GM13977 (cell line): ENCODE measurements at regions of chr12 and their contacts with region 1.

Region 1: DNA sequence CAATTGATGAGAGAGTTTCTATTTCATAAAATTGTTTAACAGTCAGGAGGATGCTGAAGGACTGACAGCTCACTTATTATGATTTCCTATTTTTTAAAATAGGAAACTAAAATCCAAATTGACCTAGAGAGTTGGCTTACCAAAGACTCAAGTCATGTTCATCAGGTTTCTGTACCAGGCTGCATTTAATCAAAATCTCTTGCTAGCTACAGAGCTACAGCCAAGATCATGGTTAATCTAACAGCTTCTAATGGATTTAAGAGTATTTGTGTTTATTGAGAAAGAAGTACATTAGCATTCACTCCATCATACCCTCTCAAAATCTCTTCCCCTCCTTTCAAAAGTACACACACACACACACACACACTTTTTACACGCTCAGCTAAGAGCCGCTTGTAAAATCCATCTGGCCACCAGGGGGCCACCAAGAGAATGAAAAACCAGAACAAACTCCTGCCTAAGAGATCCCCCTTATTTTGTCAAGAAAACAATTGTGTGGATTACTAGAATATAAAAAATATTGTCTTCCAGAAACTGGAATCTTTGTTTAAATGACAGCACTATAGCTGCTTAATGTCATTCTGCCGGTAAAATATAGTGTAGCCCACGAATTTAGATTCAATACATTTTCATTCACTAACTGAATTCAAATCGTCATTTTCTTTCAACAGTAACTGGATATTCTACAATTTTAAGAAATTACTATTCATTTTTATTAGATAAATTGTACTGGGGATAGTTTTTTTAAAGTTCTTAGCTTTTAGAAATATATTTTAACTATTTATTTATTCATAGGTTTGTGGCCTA is 334.0 kb downstream of the BTG1 start:
- DNase-seq: peak; percentile 26
- CTCF ChIP-seq: peak; percentile 78

Region 2: DNA sequence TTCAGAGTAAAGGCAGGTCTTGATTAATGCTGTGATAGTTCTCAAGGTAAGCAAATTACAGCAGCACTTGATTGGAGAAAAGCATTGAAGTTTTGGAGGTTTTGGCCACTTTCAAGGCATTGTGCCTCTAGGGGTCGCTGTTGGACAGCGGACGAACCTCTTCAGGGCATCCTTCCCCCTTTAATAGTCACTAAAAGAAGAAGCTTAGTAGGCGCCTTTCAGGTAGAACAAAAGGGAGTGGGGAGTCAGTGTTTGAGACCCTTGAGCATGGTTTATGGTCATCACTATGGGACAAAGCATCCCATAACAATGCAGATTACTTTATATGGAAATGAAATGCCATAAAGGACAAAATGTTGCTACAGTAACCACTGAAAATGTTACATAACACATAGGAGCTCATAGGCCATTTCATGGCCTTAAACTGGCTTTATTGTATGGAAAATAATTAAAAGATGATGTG is 429.6 kb before region 1 on chr12:
- in situ Hi-C with region 1: loop called (anchors 25 kb)
- DNase-seq: peak; percentile 21
- CTCF ChIP-seq: peak; percentile 84

Region 3: DNA sequence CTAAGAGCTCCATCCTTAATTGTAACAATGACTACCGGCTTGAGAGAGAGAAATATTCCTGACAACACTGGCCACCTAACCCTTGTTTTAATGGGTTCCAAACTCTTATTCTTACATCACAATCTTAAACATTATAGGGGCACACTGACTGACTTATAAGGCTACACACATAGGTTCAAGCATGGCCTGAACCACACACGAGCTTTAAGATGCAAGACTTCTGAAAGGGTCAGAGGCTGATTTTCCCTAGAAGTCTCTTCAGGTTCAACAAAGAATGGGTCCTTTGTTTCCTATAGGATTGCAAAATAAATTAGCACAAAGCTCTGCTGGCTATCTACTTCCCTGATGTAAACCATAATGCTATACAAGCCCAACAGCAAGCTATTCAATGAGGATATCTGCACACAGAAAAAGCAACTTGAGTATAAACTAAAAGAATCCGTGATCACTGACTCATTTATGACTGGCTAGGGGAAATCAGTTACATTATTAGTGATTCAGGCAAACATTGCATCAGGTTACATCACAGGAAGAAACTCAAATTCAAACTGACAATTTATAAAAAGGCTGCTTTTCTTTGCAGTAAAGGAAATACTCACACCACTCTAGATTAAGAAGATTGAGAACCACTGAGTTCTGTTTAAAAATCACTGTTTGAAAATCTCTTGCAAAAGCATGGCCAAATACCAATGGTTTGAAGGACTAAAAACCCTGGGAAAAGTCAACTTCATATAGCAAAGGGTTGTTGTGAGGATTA is 325.5 kb after region 1 on chr12:
- in situ Hi-C with region 1: loop called (anchors 10 kb)
- DNase-seq: peak; percentile 41
- CTCF ChIP-seq: no peak

Region 4: DNA sequence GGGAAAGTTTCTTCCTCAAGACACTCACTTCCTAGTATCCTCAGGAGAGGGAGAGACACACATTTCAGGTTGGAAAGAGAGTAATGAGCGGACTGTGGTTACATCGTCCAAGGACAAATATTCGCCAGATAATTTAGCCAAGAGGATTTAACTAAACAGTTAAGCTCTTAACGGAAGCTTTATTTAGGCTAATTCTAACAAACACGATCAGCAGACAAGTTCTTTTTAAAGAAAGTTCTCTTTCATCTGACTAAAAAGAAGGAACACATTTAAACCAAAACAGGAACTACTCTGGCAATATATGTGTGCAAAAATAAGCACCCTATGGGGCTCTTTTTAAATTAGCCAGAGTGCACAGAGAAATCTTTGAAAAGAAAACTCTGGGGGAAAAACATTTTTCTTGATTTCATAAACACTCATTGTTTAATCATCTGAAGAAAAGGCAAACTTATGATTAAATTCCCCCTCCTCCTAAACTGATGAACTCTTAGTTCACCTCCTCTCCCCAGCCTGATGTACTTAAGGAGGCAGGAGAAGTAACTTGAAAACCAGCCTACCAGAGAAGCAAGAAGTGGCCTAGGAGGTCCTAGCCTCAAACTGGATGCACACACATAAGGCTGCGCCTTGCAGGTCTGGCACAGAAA is 347.2 kb after region 1 on chr12:
- in situ Hi-C with region 1: no loop called
- DNase-seq: no peak
- CTCF ChIP-seq: no peak

Region 5: GRCh38 chr12:92570056-92570753 is 758.5 kb after region 1 on chr12:
- in situ Hi-C with region 1: loop called (anchors 25 kb)
- DNase-seq: peak; percentile 47
- CTCF ChIP-seq: peak; percentile 67